ENCODE measurements at regions of chr5 and their contacts with region 1.

Region 1: GRCh38 chr5:40679155-40679913 is 381 bp upstream of the PTGER4 start:
- DNase-seq: peak; percentile 83 to 92 (median 89)
- ATAC-seq: peak; percentile 65 to 68
- H3K4me3 Mint-ChIP-seq: peak overlapping the region; percentile 90 to 100 (median 97)
- H3K27ac Mint-ChIP-seq: peak overlapping the region; percentile 92 to 99 (median 98)
- H3K4me1 Mint-ChIP-seq: peaks cover 32 to 83% (median 56%) of the 10 kb centered on the region in 4 donors
- H3K27me3 Mint-ChIP-seq: no peaks in the 10 kb centered on the region

Region 2: DNA sequence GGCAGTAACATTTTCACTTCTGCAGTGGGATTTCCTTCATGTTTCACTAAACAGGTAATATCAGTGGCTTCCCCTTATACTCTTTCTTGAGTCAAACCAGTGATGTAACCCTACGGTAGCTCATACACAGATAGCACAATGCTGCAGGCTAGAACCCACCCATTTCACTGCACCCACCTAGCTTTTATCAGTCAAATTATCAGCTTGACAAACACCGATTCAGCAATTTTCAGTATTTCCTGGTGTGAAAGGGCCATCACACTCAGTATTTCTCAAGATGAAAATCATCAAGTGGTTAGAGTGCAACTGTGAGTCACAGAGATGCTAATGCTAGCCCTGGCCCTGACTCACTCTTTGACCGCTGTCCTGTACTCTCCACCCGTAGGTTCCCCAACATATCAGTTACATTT is 241.9 kb before region 1 on chr5:
- POLR2A ChIA-PET with region 1: interaction called, 10 read pairs
- DNase-seq: peak in 3 of 10 donors; percentile 12 to 35 (median 14)
- ATAC-seq: no peak
- H3K4me3 Mint-ChIP-seq: peak overlapping the region in 7 of 10 donors; percentile 9 to 69 (median 33)
- H3K27ac Mint-ChIP-seq: peak overlapping the region; percentile 81 to 98 (median 94)
- H3K4me1 Mint-ChIP-seq: peaks cover 33 to 72% (median 65%) of the 10 kb centered on the region in 4 donors
- H3K27me3 Mint-ChIP-seq: no peaks in the 10 kb centered on the region

Region 3: DNA sequence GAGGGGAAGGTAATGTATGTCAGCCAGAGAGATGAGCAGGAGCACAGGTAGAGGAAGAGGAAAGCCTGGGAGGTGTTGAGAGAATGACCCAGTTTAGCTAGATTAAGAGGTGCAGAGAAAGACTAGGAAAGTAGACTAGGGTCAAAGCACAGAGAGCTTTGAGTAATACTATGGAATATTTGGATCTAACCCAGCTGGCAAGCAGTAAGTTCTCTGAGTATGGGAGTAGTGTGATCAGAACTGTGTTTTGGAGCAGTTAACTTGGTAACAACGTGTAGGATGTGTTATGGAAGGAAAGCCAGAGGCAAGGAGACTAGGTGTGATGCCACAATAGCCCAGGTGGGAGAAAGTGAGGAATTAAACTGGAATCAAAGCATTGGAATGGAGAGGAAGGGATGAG is 84.5 kb before region 1 on chr5:
- POLR2A ChIA-PET with region 1: no interaction called
- DNase-seq: no peak
- ATAC-seq: no peak
- H3K4me3 Mint-ChIP-seq: no peak overlapping the region
- H3K27ac Mint-ChIP-seq: peak overlapping the region in 2 of 10 donors; percentile 0 to 17
- H3K4me1 Mint-ChIP-seq: peaks cover 6 to 21% (median 11%) of the 10 kb centered on the region in 4 donors
- H3K27me3 Mint-ChIP-seq: peaks cover 0 to 7% (median 0%) of the 10 kb centered on the region in 5 donors

Region 4: GRCh38 chr5:40623480-40624420 is 55.6 kb before region 1 on chr5:
- POLR2A ChIA-PET with region 1: interaction called, 13 read pairs
- DNase-seq: peak in 8 of 10 donors; percentile 5 to 79 (median 65)
- ATAC-seq: peak; percentile 98 to 99
- H3K4me3 Mint-ChIP-seq: peak overlapping the region in 9 of 10 donors; percentile 21 to 79 (median 60)
- H3K27ac Mint-ChIP-seq: peak overlapping the region; percentile 78 to 98 (median 92)
- H3K4me1 Mint-ChIP-seq: peaks cover 26 to 48% (median 44%) of the 10 kb centered on the region in 4 donors
- H3K27me3 Mint-ChIP-seq: no peaks in the 10 kb centered on the region

Region 5: DNA sequence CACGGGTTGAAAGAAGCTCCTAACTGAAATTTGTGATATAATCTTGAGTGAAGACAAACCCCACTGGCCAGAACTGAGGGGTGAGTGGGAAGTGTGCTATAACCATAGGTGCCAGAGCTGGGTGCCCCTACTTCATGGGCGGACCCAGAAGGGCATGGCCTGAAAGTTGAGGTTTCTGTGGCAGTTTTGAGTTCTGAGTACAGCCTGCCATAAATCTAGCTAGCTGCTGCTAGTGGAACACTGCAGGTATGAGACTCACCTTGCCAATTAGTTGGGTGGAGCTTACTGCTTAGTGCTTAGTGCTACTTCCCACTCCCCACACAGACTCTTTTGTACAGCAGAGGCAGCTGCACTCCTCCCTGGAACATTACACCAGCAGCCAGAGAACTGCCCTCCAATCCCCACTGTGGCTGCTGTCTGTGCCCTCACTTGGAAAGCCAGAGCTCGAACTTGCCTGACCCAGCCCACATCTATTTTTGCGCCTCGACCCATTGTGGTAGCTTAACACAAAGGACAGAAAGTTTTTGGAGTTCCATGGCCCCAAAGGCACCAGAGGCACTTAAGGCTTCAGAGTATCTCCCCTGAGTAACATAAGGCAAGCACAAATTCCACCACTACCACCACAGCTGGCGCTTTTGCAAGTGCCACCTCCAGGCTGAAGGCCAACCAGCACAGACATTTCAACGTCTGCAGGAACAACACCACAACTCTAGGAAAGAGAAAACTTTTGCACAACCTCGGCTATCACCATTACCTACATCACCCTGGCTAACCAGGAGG is 26.7 kb before region 1 on chr5:
- POLR2A ChIA-PET with region 1: interaction called, 140 read pairs
- DNase-seq: peak in 3 of 10 donors; percentile 25 to 65 (median 38)
- ATAC-seq: peak; percentile 35 to 40
- H3K4me3 Mint-ChIP-seq: peak overlapping the region; percentile 7 to 83 (median 74)
- H3K27ac Mint-ChIP-seq: peak overlapping the region; percentile 88 to 96 (median 94)
- H3K4me1 Mint-ChIP-seq: peaks cover 49 to 81% (median 69%) of the 10 kb centered on the region in 4 donors
- H3K27me3 Mint-ChIP-seq: no peaks in the 10 kb centered on the region

Region 6: GRCh38 chr5:40689438-40689837 is 10.1 kb after region 1 on chr5:
- POLR2A ChIA-PET with region 1: no interaction called
- DNase-seq: peak in 1 of 10 donors; percentile 19
- ATAC-seq: peak in 1 of 2 donors; percentile 27
- H3K4me3 Mint-ChIP-seq: peak overlapping the region in 6 of 10 donors; percentile 39 to 100 (median 57)
- H3K27ac Mint-ChIP-seq: peak overlapping the region in 8 of 10 donors; percentile 5 to 93 (median 78)
- H3K4me1 Mint-ChIP-seq: peaks cover 25 to 73% (median 73%) of the 10 kb centered on the region in 4 donors
- H3K27me3 Mint-ChIP-seq: no peaks in the 10 kb centered on the region

Measured in naive thymus-derived CD8-positive, alpha-beta T cell (primary cell).